Ascending aorta (tissue), 2 donors: ENCODE measurements at regions of chr10 and their contacts with region 1.

Region 1: GRCh38 chr10:132593389-132593788 is 55.8 kb downstream of the INPP5A start:
- DNase-seq: no peak
- H3K4me3 ChIP-seq: no peak overlapping the region
- H3K27ac ChIP-seq: peak overlapping the region; percentile 81 to 86
- H3K4me1 ChIP-seq: peaks cover 28 to 53% of the 10 kb centered on the region in 2 donors
- H3K27me3 ChIP-seq: no peaks in the 10 kb centered on the region
- CTCF ChIP-seq: no peak

Region 2: GRCh38 chr10:132571650-132572535 is 21.5 kb before region 1 on chr10:
- intact Hi-C with region 1: loop called (anchors 2 kb)
- DNase-seq: peak; percentile 48 to 84
- H3K4me3 ChIP-seq: peak overlapping the region in 1 of 2 donors; percentile 34
- H3K27ac ChIP-seq: peak overlapping the region; percentile 70 to 78
- H3K4me1 ChIP-seq: peaks cover 35 to 49% of the 10 kb centered on the region in 2 donors
- H3K27me3 ChIP-seq: no peaks in the 10 kb centered on the region
- CTCF ChIP-seq: no peak

Region 3: GRCh38 chr10:132631341-132631735 is 37.9 kb after region 1 on chr10:
- intact Hi-C with region 1: loop called (anchors 1 kb)
- DNase-seq: peak; percentile 64 to 92
- H3K4me3 ChIP-seq: peak overlapping the region in 1 of 2 donors; percentile 37
- H3K27ac ChIP-seq: peak overlapping the region; percentile 97 to 98
- H3K4me1 ChIP-seq: peaks cover 34 to 73% of the 10 kb centered on the region in 2 donors
- H3K27me3 ChIP-seq: no peaks in the 10 kb centered on the region
- CTCF ChIP-seq: no peak

Region 4: DNA sequence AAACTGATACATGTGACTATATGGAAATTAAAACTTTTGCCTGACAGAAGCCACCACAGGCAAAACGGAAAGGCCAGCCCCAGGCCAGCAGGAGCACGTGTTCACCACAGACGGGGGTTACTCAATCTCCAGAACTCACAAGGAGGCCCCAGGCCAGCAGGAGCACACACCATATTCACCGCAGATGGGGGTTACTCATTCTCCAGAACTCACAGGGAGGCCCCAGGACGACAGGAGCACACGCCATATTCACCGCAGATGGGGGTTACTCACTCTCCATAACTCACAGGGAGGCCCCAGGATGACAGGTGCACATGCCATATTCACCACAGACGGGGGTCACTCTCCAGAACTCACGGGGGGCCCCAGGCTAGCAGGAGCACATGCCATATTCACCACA is 131.1 kb after region 1 on chr10:
- intact Hi-C with region 1: no loop called
- DNase-seq: no peak
- H3K4me3 ChIP-seq: no peak overlapping the region
- H3K27ac ChIP-seq: no peak overlapping the region
- H3K4me1 ChIP-seq: no peaks in the 10 kb centered on the region
- H3K27me3 ChIP-seq: no peaks in the 10 kb centered on the region
- CTCF ChIP-seq: no peak